ENCODE measurements at regions of chr12 and their contacts with region 1.

Region 1: DNA sequence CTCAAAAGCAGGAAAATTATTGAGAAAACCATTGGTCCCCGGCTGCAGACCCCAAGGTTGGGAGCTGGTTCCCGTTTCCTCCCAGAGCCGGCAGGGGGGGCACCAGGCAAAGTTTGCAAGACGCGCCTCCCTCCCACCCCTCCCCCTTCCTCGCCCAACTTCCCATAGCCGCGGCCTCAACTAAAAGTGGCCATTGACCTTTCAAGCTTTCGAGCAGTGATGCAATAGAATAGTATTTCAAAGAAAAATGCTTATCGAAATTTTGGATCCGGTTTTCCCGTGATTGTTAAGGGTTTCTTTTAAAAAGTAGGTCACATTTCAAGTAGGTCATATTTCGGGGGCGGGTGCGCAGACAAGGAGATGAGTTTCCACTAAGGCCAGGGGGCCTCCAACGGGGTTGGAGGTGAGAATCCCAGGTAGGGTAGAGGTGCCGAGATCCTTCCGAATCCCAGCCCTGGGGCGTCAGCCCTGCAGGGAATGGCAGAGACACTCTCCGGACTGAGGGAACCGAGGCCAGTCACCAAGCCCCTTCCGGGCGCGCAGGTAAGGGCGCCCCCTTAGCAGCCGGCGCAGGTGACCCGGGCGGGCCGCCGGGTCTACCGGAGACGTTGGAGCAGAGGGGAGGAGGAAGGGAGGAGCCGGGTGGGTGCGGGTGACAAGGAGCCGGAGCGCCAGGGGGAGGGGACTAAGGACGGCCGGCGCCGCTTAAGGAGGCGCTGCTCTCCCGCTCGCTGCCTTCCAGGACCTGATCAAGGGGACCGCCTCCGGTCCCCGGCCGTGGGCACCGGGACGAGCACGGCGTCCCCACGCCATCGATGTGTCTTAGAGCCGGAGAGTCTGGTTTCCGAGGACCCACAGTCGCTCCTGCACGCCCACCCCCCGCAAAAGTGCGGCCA is 2.6 kb upstream of the SOCS2 start:
- DNase-seq: peak; percentile 91 to 96
- ATAC-seq: peak; percentile 77 to 83
- H3K4me3 ChIP-seq: peak overlapping the region; percentile 64
- H3K27ac ChIP-seq: peak overlapping the region; percentile 94
- H3K4me1 ChIP-seq: peaks cover 15% of the 10 kb centered on the region
- CTCF ChIP-seq: peak; percentile 82
- EP300 ChIP-seq: no peak
- POLR2A ChIP-seq: no peak
- RAD21 ChIP-seq: peak; percentile 87 to 96

Region 2: GRCh38 chr12:93502802-93503623 is 66.9 kb before region 1 on chr12:
- CTCF ChIA-PET with region 1: interaction called, 33 read pairs
- POLR2A ChIA-PET with region 1: interaction called, 6 read pairs
- DNase-seq: peak in 1 of 2 experiments; percentile 52
- ATAC-seq: peak; percentile 39 to 70; a peak in 3 of 6 replicates
- H3K4me3 ChIP-seq: no peak overlapping the region
- H3K27ac ChIP-seq: no peak overlapping the region
- H3K4me1 ChIP-seq: no peaks in the 10 kb centered on the region
- CTCF ChIP-seq: peak; percentile 97
- EP300 ChIP-seq: no peak
- POLR2A ChIP-seq: no peak
- RAD21 ChIP-seq: peak; percentile 94 to 96

Region 3: GRCh38 chr12:93591137-93591868 is 21.4 kb after region 1 on chr12:
- CTCF ChIA-PET with region 1: interaction called, 5 read pairs
- POLR2A ChIA-PET with region 1: interaction called, 11 read pairs
- DNase-seq: peak; percentile 80 to 82
- ATAC-seq: peak; percentile 94 to 97
- H3K4me3 ChIP-seq: peak overlapping the region; percentile 56
- H3K27ac ChIP-seq: peak overlapping the region; percentile 70 to 86
- H3K4me1 ChIP-seq: no peaks in the 10 kb centered on the region; the same call in 2 of the 3 replicates
- CTCF ChIP-seq: no peak
- EP300 ChIP-seq: no peak
- POLR2A ChIP-seq: peak; percentile 51
- RAD21 ChIP-seq: peak in 1 of 2 experiments; percentile 34; a peak in 1 of 5 replicates

Region 4: DNA sequence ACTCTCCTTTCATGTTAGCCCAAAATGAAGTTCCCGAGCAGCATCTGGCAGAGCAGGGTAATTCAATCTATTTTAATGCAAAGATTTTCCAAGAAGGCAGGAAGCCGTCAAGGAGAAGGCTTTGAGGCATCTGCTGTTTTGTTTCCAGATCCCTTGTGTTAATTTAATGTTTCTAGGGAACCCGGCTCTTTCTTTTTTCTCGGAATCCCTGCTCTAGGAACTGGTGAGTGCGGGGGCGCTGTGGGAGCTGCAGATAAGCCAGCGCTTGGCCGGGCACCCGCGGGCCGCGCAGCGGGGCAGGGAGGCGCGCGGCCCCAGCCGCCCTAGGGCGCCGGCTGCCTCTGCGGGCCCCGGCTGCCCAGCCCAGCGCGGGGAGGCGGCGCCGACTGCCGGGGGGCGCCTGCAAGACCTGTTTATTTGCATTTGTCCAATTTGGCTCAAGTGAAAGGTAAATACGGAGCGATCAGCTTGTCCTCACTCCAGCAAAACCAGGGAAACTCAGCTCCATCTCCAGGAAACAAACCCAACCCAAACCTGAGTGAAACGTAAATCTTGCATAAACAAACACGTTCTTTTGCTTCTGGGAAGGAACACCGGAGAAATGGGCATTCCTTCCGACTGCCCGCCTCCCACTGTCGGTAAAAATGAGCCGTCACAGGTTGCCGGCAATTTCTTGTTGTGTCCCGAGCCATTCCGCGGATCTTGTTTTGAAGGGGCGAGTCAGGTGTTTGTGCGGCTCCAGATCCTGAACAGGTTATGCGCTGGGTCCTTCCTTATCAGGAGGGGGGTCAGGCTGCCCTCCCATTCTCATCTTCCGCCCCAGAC is 172.4 kb after region 1 on chr12:
- CTCF ChIA-PET with region 1: interaction called, 91 read pairs
- POLR2A ChIA-PET with region 1: interaction called, 7 read pairs
- DNase-seq: peak; percentile 71 to 81
- ATAC-seq: peak; percentile 98
- H3K4me3 ChIP-seq: peak overlapping the region; percentile 59
- H3K27ac ChIP-seq: peak overlapping the region; percentile 73 to 87
- H3K4me1 ChIP-seq: peaks cover 21% of the 10 kb centered on the region
- CTCF ChIP-seq: peak; percentile 88
- EP300 ChIP-seq: no peak
- POLR2A ChIP-seq: no peak
- RAD21 ChIP-seq: peak; percentile 36 to 80

Region 5: GRCh38 chr12:93785262-93786010 is 215.5 kb after region 1 on chr12:
- CTCF ChIA-PET with region 1: interaction called, 6 read pairs
- POLR2A ChIA-PET with region 1: interaction called, 11 read pairs
- DNase-seq: peak; percentile 86 to 96
- ATAC-seq: peak; percentile 98
- H3K4me3 ChIP-seq: no peak overlapping the region; the same call in 2 of the 3 replicates
- H3K27ac ChIP-seq: peak overlapping the region; percentile 84 to 89
- H3K4me1 ChIP-seq: peaks cover 52% of the 10 kb centered on the region
- CTCF ChIP-seq: no peak
- EP300 ChIP-seq: peak; percentile 83 to 89; a peak in 4 of 5 replicates
- POLR2A ChIP-seq: no peak
- RAD21 ChIP-seq: peak; percentile 34 to 58